ENCODE measurements at regions of chr7 and their contacts with region 1.

Region 1: GRCh38 chr7:30026229-30027064 is at the start of gene FKBP14:
- DNase-seq: peak; percentile 88 to 96
- ATAC-seq: peak; percentile 83 to 93 (median 87)
- H3K4me3 ChIP-seq: peak within 1 kb of the TSS; percentile 88
- H3K4me3 Mint-ChIP-seq: no peak within 1 kb of the TSS
- H3K27ac ChIP-seq: peak within 1 kb of the TSS; percentile 76
- H3K27ac Mint-ChIP-seq: peak within 1 kb of the TSS; percentile 85 to 92
- H3K4me1 ChIP-seq: peaks cover 15% of the 10 kb centered on the region
- H3K4me1 Mint-ChIP-seq: peaks cover 35 to 45% of the 10 kb centered on the region in 2 donors
- H3K27me3 ChIP-seq: no peaks in the 10 kb centered on the region
- H3K27me3 Mint-ChIP-seq: no peaks in the 10 kb centered on the region
- CTCF ChIP-seq: no peak
- total RNA-seq, gene FKBP14: 11.1 to 13.4 (median 11.9) TPM

Region 2: DNA sequence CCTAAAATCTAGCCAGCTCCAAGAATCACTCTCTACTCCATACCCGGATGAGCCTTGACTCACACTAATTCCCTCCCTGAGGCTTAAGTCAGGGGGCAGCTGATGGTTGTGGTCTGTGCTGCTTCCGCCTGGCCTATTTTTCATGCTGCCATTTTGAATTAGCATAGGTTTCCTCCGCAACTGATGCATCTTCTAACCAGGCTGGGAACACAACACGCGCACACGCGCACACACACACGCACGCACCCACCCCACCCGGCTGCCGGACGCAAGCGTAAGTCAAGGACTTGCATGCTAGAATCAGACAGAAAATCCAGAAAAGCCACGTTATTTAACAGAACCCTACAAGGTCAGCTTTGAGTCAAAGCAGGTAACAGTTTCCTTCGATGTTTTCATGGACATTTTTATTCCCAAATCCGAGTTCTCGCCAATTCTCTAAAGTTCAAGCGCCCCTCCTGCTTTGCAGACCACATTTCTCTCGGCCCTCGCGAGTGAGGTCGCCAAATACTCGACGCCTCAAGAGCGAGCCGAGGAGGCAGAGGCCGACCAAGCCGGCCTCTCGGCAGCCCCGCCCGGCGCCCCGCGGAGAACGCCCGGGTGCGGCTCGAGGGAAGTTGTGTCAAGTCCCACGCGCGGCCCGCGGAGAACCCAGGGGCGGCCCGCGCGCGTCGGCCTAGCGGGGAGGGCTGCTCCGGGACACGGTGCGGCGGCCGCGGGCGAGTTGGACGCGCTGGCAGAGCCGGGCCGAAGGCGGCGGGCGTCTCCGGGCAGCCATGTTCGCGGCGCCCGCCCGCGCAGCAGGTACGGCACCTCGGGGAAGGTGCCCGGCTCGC is 37.8 kb before region 1 on chr7:
- intact Hi-C with region 1: loop called (anchors 2 kb)
- DNase-seq: peak; percentile 41 to 45
- ATAC-seq: peak; percentile 55 to 68 (median 67)
- H3K4me3 ChIP-seq: peak overlapping the region; percentile 79
- H3K4me3 Mint-ChIP-seq: peak overlapping the region; percentile 85
- H3K27ac ChIP-seq: peak overlapping the region; percentile 77
- H3K27ac Mint-ChIP-seq: peak overlapping the region; percentile 83 to 88
- H3K4me1 ChIP-seq: peaks cover 24% of the 10 kb centered on the region
- H3K4me1 Mint-ChIP-seq: peaks cover 28 to 32% of the 10 kb centered on the region in 2 donors
- H3K27me3 ChIP-seq: no peaks in the 10 kb centered on the region
- H3K27me3 Mint-ChIP-seq: peaks cover 0 to 2% of the 10 kb centered on the region in 2 donors
- CTCF ChIP-seq: no peak

Region 3: DNA sequence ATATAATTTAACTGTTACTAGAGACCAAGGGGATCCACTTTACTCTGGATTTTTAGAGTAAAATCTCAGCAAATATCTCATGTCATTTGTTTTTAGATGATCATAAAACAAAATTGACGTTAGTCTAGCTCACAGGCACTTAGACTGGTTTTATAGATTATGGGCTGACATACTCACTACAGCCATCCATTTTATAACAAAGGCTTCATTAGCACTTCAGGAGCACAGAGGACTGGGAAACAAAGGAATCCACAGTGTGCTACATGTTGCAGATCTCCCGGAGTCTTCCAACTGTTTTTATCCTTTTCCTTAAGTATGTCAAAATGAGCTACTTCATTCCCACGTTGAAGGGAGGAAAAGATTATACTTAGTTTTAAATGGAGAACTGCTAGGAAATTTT is 21.0 kb before region 1 on chr7:
- intact Hi-C with region 1: no loop called
- DNase-seq: no peak
- ATAC-seq: no peak
- H3K4me3 ChIP-seq: no peak overlapping the region
- H3K4me3 Mint-ChIP-seq: no peak overlapping the region
- H3K27ac ChIP-seq: no peak overlapping the region
- H3K27ac Mint-ChIP-seq: no peak overlapping the region
- H3K4me1 ChIP-seq: no peaks in the 10 kb centered on the region
- H3K4me1 Mint-ChIP-seq: no peaks in the 10 kb centered on the region
- H3K27me3 ChIP-seq: no peaks in the 10 kb centered on the region
- H3K27me3 Mint-ChIP-seq: no peaks in the 10 kb centered on the region
- CTCF ChIP-seq: no peak

Region 4: DNA sequence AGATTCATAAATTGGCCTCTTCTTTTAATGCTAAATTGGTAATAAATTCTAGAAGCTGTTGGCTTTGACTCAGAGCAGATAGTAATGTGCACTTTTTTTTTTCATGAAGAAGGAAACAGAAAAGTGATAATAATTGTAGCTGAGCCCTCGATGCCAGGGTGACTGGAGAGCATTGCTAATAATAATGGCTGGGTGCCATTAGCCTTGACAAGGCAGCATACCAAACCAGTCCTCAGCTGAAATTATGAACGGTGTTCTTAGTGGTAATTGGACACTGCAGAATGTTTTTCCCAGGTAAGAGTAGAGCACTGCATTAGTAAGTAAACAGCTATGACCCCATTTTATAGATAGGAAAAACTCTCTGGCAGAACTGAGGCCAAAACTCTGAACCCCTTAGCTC is 20.7 kb after region 1 on chr7:
- intact Hi-C with region 1: no loop called
- DNase-seq: no peak
- ATAC-seq: no peak
- H3K4me3 ChIP-seq: no peak overlapping the region
- H3K4me3 Mint-ChIP-seq: no peak overlapping the region
- H3K27ac ChIP-seq: no peak overlapping the region
- H3K27ac Mint-ChIP-seq: no peak overlapping the region
- H3K4me1 ChIP-seq: no peaks in the 10 kb centered on the region
- H3K4me1 Mint-ChIP-seq: peaks cover 3% of the 10 kb centered on the region in 2 donors
- H3K27me3 ChIP-seq: no peaks in the 10 kb centered on the region
- H3K27me3 Mint-ChIP-seq: no peaks in the 10 kb centered on the region
- CTCF ChIP-seq: no peak

Region 5: DNA sequence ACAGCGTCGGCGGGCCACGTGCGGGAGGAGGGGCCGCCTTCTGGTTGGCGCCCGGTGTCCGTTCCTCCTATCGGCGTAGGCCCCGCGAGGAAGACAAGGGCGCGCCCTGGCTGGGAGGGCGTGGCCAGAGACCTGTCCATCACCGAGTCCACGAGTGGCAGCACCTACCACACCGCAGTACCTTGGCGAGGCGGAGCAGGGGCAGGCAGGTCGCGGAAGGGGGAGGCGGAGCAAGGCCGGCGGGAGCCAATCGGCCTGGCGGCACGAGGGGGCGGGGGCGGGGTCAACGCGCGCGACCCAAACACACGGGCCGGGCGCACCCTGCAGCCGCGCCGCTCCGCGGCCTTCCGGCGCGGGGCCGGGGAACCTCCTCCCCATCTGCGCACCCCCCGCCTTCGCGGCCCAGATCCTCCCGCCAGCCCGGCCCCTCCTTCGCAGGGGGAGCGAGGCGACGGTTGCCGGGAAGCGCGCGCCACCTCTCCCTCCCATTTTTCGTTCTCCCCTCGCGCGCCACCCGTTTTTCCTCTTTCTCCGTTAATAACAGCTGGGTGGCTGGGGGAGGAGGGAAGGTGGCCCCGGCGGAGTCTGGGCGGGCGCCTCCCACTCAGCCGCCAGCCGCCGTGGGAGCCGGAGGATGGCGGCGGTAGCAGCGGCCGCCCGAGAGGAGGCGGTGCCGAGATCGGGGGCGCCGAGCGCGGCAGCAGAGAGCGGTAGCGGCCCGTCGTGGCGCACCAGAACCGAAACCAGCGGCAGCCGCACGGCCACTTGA is 258.0 kb after region 1 on chr7 and contains the start of gene ZNRF2:
- intact Hi-C with region 1: loop called (anchors 1 kb)
- DNase-seq: peak; percentile 96 to 100
- ATAC-seq: peak; percentile 81 to 94 (median 83)
- H3K4me3 ChIP-seq: peak within 1 kb of the TSS; percentile 65
- H3K4me3 Mint-ChIP-seq: peak within 1 kb of the TSS; percentile 84
- H3K27ac ChIP-seq: peak within 1 kb of the TSS; percentile 90
- H3K27ac Mint-ChIP-seq: peak within 1 kb of the TSS; percentile 89 to 98
- H3K4me1 ChIP-seq: peaks cover 8% of the 10 kb centered on the region
- H3K4me1 Mint-ChIP-seq: peaks cover 52 to 53% of the 10 kb centered on the region in 2 donors
- H3K27me3 ChIP-seq: no peaks in the 10 kb centered on the region
- H3K27me3 Mint-ChIP-seq: no peaks in the 10 kb centered on the region
- CTCF ChIP-seq: peak; percentile 25
- total RNA-seq, gene ZNRF2: 35.0 to 43.7 (median 36.3) TPM

Region 6: DNA sequence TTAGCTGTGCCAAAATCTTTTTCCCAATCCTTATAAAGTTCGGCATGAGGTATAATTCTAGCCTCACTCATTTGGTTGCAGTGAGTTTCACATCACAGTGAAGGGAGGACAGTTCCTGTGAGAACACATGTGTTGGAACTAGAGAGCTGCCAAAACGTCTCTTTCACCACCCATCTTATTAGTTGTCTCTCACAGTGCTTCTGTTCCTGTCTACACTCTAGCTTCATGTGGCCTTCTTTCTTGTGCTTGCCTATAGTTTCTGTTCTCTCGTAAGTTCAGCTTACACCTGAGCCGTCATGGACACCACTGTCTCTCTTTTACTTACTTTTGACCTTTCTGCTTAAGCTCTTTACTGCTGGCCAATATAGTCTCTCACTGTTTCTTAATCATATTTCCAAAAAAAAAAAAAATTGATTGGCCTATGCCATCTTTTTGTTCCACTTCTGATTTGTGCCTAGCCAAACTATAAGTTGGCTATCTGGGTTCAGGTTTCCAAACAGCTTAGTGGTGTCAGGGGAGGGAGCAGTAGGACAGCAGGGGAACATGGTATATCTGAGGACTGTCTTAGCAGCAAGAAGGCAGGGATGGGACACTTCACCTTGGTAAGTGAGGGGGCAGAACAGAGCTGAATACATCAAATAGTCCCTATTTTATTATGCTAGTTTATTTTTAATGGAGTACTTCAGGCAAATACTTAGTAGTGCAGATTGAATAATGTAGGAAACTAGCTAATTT is 296.0 kb after region 1 on chr7:
- intact Hi-C with region 1: loop called (anchors 2 kb)
- DNase-seq: peak in 1 of 2 donors; percentile 70
- ATAC-seq: peak; percentile 85 to 94 (median 91)
- H3K4me3 ChIP-seq: peak overlapping the region; percentile 30
- H3K4me3 Mint-ChIP-seq: peak overlapping the region; percentile 91
- H3K27ac ChIP-seq: peak overlapping the region; percentile 87
- H3K27ac Mint-ChIP-seq: peak overlapping the region; percentile 97 to 98
- H3K4me1 ChIP-seq: peaks cover 11% of the 10 kb centered on the region
- H3K4me1 Mint-ChIP-seq: peaks cover 57 to 63% of the 10 kb centered on the region in 2 donors
- H3K27me3 ChIP-seq: no peaks in the 10 kb centered on the region
- H3K27me3 Mint-ChIP-seq: no peaks in the 10 kb centered on the region
- CTCF ChIP-seq: no peak

Region 7: DNA sequence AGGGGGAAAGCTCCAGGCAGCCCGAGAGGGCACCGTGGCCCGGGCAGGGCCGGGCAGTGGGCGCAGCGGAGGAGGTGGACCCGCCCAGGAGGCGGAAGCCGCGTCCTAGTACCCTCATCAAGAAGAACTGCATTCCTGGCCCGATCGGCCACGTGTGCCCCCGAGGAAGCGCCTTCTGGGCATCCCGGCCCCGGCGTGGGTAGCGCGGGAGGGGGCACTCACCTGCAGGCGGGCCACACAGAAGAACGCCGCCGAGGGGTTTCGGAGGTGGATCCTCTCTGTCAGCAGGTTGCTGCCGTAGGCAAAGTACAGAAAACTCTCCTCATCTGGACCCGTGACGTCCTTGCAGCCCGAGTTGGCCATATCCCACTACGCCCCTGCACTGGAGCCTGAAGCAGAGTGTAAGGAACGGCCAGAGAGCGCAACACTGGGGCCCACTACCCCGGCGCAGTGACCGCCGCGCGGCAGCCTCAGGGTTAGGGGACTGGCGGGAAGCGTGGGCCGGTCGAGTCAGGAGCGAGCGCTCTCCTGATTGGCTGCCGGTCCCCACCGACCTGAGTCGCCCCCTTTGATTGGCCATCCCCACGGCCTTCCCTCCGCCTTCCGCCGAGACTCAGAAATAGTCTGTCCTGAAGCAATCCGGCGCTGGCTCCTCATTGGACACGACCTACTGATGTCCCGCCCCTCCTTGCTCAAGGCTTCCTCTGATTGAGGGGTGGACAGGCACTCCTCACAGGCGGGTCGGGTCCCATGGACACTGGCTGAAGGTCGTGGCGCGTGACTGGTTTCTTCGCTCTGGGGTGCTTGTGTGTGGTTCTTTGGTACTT is 478.1 kb after region 1 on chr7 and contains the start of gene GGCT:
- intact Hi-C with region 1: loop called (anchors 10 kb)
- DNase-seq: peak; percentile 97 to 98
- ATAC-seq: peak; percentile 96 to 100 (median 98)
- H3K4me3 ChIP-seq: peak within 1 kb of the TSS; percentile 85
- H3K4me3 Mint-ChIP-seq: peak within 1 kb of the TSS; percentile 89
- H3K27ac ChIP-seq: peak within 1 kb of the TSS; percentile 51
- H3K27ac Mint-ChIP-seq: peak within 1 kb of the TSS; percentile 77 to 91
- H3K4me1 ChIP-seq: peaks cover 15% of the 10 kb centered on the region
- H3K4me1 Mint-ChIP-seq: peaks cover 31 to 35% of the 10 kb centered on the region in 2 donors
- H3K27me3 ChIP-seq: no peaks in the 10 kb centered on the region
- H3K27me3 Mint-ChIP-seq: no peaks in the 10 kb centered on the region
- CTCF ChIP-seq: no peak
- total RNA-seq, gene GGCT: 8.7 to 10.8 (median 9.2) TPM

Region 8: GRCh38 chr7:30594549-30595435 is 568.3 kb after region 1 on chr7 and contains the start of gene GARS1:
- intact Hi-C with region 1: loop called (anchors 2 kb)
- DNase-seq: peak; percentile 89 to 96
- ATAC-seq: peak; percentile 88 to 97 (median 93)
- H3K4me3 ChIP-seq: peak within 1 kb of the TSS; percentile 61
- H3K4me3 Mint-ChIP-seq: peak within 1 kb of the TSS; percentile 96
- H3K27ac ChIP-seq: peak within 1 kb of the TSS; percentile 85
- H3K27ac Mint-ChIP-seq: peak within 1 kb of the TSS; percentile 94 to 99
- H3K4me1 ChIP-seq: peaks cover 18% of the 10 kb centered on the region
- H3K4me1 Mint-ChIP-seq: peaks cover 37 to 50% of the 10 kb centered on the region in 2 donors
- H3K27me3 ChIP-seq: no peaks in the 10 kb centered on the region
- H3K27me3 Mint-ChIP-seq: no peaks in the 10 kb centered on the region
- CTCF ChIP-seq: no peak
- total RNA-seq, gene GARS1: 80.2 to 107 (median 92.4) TPM

Region 9: DNA sequence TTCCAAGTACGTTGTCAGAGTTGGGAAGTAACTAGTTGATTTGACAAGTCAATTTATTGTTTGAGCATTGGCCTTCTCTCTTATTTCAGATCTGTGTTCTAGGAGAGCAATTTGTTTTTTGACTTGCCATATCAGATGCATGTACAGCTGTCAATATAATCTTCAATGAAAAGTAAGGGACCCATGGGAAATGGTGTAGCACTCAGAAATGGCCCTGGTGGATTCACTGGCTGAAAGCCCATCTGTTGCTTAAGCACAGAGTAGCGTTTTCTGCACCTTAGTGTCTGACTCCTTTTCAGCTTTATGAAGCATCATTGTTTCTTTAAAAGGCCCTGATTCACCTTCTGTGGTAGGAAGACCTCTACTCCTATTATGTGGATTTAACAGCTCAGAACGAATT is 578.5 kb after region 1 on chr7:
- intact Hi-C with region 1: no loop called
- DNase-seq: no peak
- ATAC-seq: no peak
- H3K4me3 ChIP-seq: no peak overlapping the region
- H3K4me3 Mint-ChIP-seq: no peak overlapping the region
- H3K27ac ChIP-seq: no peak overlapping the region
- H3K27ac Mint-ChIP-seq: no peak overlapping the region
- H3K4me1 ChIP-seq: no peaks in the 10 kb centered on the region
- H3K4me1 Mint-ChIP-seq: no peaks in the 10 kb centered on the region
- H3K27me3 ChIP-seq: no peaks in the 10 kb centered on the region
- H3K27me3 Mint-ChIP-seq: no peaks in the 10 kb centered on the region
- CTCF ChIP-seq: no peak

Measured in natural killer cell (primary cell).